Motor neuron (in vitro differentiated cells): ENCODE measurements at regions of chr14 and their contacts with region 1.

Region 1: DNA sequence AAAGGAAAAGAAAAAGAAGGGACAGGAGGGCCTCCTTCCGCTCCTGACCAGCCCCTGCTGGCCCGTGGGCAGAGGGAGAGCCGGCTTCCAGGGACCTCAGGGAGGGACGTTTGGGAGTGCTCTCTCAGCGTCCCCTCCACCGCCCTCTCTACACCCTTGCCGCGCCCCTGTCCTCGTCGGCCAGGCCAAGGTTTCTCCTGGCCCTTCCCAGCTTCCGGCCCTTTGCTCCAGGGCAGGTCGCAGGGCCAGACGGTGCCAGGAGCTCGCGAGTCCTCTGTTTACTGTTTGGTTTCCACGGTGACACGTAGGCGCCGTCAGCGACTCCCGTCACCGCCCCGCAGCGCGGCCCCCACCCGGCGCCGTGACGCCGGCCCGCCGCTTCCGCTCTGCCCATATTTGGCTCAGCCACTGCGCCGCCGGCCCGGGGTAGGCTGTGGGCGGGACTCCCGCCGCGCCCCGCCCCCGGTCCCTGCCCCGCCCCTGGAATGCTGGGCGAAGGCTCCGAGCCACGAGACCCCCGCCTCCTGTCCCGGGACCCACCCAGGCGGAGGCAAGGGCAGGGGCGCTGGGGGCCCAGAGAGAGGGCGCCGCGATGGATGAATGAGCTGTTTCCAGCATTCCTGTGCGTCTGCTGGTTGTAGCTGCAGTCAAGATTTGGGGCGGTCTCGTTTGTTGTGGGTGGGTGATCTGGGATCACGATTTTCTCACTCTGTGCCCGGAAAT is 15.5 kb downstream of the FOS start:
- ATAC-seq: peak; percentile 78 to 92 (median 89)
- H3K4me3 ChIP-seq: peak overlapping the region; percentile 40 to 57 (median 49)
- H3K27ac ChIP-seq: peak overlapping the region; percentile 72 to 88
- H3K4me1 ChIP-seq: peaks cover 9 to 10% of the 10 kb centered on the region in 2 donors

Region 2: DNA sequence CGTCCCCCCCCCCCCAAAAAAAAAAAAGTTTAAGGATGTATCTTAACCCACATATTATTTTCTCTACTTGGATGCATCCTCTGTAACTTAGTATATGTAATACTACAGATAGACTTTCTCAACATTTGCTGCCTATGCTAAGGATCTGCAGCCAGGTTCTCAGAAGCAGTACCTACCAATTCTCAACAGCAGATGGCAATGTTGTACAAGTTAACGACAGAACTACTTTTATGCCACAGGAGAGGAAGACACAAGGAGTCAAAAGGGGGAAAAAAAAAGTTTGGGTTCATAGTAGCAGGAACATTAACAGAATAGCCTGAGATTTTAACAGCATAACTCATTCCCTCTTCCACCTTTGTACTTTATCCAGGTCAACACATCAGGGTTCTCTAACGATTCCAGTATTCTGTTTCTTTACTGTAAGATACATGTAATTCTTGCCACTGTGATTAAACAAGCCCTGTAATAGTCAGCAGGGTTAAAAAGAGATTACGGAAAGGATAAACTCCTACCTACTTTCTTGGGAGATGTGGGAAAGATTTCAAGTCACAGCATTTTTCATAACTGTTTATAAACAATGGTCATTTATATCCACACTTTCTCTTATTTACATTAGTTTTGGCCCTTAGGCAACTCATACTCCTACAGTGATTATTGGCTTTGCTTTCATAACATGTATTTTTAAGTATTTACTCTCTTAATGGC is 161.5 kb before region 1 on chr14:
- in situ Hi-C with region 1: loop called in 5 of 9 experiments (anchors 5 to 25 kb)
- ATAC-seq: peak; percentile 61 to 89 (median 84)
- H3K4me3 ChIP-seq: no peak overlapping the region
- H3K27ac ChIP-seq: no peak overlapping the region
- H3K4me1 ChIP-seq: peaks cover under 1 to 5% of the 10 kb centered on the region in 2 donors